Activated T-helper 1 cell treated with anti-CD3 and anti-CD28 coated beads, Interleukin-12 subunit alpha, Interleukin-12 subunit beta, Interleukin-2, Interleukin-4 antibody, amounts not matched to agents 30 ng/mL and 10 ng/mL and 1 ng/mL, durations not matched to agents 14 hours and 24 hours and 36 hours (primary cell): ENCODE measurements at regions of chr1 and their contacts with region 1.

Region 1: DNA sequence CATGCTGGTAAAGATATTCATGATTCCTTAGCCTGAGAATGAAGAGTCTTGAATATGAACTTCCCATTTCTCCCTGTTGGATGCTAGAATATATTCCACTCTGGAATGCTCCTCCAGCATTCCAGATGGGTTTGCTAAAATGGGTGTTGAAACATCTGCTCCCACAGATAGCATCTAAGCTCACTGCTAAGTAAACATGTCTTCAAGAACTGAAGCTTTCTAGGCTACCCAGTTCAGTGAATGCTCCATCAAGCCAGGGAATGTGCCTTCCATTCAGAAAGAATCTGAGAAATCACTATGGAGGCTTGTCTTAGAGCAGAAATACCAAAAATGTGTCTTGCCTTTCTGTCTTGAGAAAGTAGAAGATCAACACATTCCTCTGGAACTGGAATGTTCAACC is 81.1 kb downstream of the TNFSF18 start:
- DNase-seq: no peak
- H3K4me3 Mint-ChIP-seq: no peak overlapping the region
- H3K27ac Mint-ChIP-seq: no peak overlapping the region
- H3K4me1 Mint-ChIP-seq: peaks cover 10% of the 10 kb centered on the region
- H3K27me3 Mint-ChIP-seq: peaks cover 15% of the 10 kb centered on the region

Region 2: GRCh38 chr1:172837816-172838680 is 131.6 kb before region 1 on chr1:
- intact Hi-C with region 1: loop called (anchors 2 kb)
- DNase-seq: peak; percentile 29
- H3K4me3 Mint-ChIP-seq: no peak overlapping the region
- H3K27ac Mint-ChIP-seq: peak overlapping the region; percentile 26
- H3K4me1 Mint-ChIP-seq: peaks cover 46% of the 10 kb centered on the region
- H3K27me3 Mint-ChIP-seq: peaks cover 65% of the 10 kb centered on the region

Region 3: DNA sequence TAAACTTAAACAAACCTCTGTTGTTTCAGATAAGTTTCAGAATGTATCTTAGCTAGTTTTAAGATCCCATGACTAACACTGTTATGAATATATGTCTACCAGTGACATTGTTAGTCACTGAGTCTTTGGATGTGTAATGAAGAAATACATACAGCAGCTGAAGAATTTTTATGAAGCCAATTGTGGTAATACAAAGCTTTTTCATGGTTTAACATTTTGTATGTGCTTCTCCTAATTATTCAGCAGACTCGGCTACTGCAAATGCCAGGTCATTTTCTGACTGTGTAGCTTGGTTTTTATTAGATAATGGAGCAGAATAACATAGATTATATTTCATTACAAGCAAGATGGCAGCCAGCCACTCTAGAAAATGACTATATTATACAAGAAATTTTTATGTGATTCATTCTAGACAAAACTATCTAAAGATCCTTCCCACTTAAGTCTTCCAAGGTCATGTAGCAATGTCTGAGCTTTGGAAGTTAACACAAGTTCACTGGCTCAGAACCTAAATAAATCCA is 66.7 kb before region 1 on chr1:
- intact Hi-C with region 1: loop called (anchors 2 kb)
- DNase-seq: no peak
- H3K4me3 Mint-ChIP-seq: no peak overlapping the region
- H3K27ac Mint-ChIP-seq: no peak overlapping the region
- H3K4me1 Mint-ChIP-seq: peaks cover 24% of the 10 kb centered on the region
- H3K27me3 Mint-ChIP-seq: peaks cover 33% of the 10 kb centered on the region

Region 4: GRCh38 chr1:173043253-173043652 is 73.6 kb after region 1 on chr1:
- intact Hi-C with region 1: loop called (anchors 5 kb)
- DNase-seq: no peak
- H3K4me3 Mint-ChIP-seq: no peak overlapping the region
- H3K27ac Mint-ChIP-seq: no peak overlapping the region
- H3K4me1 Mint-ChIP-seq: peaks cover 20% of the 10 kb centered on the region
- H3K27me3 Mint-ChIP-seq: peaks cover 2% of the 10 kb centered on the region